ENCODE measurements at regions of chr19 and their contacts with region 1.

Region 1: DNA sequence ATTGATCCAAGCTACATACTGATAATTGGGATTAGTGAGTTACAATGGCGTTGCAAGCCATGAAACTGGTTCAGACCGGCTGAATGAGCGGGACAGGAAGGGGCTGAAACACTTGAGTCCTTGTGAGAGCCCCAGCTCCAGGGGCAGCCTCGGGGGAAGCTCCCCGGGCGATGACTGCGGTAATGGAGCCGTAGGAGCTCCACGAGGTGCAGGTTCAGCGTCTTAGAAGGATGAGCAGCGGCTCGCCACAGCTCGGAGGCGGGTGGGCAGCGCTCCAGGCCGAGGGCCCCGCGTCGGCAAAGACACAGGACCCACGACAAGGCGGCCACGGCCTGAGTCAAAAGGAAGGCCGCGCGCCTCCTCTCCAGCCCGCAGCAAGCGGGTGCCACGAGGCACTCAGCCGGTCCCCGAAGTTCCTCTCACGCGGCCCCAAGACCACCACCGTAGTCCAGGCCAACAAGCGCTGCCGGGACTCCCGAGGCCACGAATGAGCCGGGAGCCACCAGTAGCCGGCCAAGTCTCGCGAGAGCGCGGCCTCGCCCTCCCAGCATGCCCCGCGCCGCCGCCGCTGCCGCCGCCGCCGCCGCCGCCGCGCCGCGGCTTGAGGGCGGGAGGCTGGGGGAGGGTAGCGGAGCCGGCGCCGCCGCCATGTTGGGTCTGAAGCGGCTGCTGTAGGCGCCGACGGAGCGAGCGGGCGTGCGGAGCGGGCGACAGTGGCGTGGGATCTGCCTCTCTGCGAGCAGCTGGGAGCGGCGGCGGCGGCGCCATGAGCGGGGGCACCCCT is at the start of gene LSM14A:
- DNase-seq: peak; percentile 96
- ATAC-seq: peak; percentile 80 to 96 (median 85)
- H3K4me3 ChIP-seq: peak within 1 kb of the TSS; percentile 90
- H3K4me3 Mint-ChIP-seq: peak within 1 kb of the TSS; percentile 96
- H3K27ac ChIP-seq: peak within 1 kb of the TSS; percentile 98
- H3K27ac Mint-ChIP-seq: peak within 1 kb of the TSS; percentile 86 to 90
- H3K4me1 ChIP-seq: peaks cover 39% of the 10 kb centered on the region
- H3K4me1 Mint-ChIP-seq: peaks cover 29 to 48% of the 10 kb centered on the region in 2 donors
- H3K27me3 ChIP-seq: no peaks in the 10 kb centered on the region
- H3K27me3 Mint-ChIP-seq: peaks cover 4 to 8% of the 10 kb centered on the region in 2 donors
- CTCF ChIP-seq: no peak
- total RNA-seq, gene LSM14A: 201 to 246 (median 202) TPM

Region 2: GRCh38 chr19:34184880-34185491 is 12.9 kb after region 1 on chr19:
- intact Hi-C with region 1: loop called (anchors 1 kb)
- DNase-seq: peak; percentile 50 to 64
- ATAC-seq: peak; percentile 89 to 96 (median 91)
- H3K4me3 ChIP-seq: no peak overlapping the region
- H3K4me3 Mint-ChIP-seq: peak overlapping the region; percentile 70
- H3K27ac ChIP-seq: peak overlapping the region; percentile 87
- H3K27ac Mint-ChIP-seq: peak overlapping the region; percentile 89 to 98
- H3K4me1 ChIP-seq: peaks cover 34% of the 10 kb centered on the region
- H3K4me1 Mint-ChIP-seq: peaks cover 74 to 76% of the 10 kb centered on the region in 2 donors
- H3K27me3 ChIP-seq: no peaks in the 10 kb centered on the region
- H3K27me3 Mint-ChIP-seq: no peaks in the 10 kb centered on the region
- CTCF ChIP-seq: no peak

Region 3: GRCh38 chr19:34217952-34218817 is 46.1 kb after region 1 on chr19:
- intact Hi-C with region 1: loop called (anchors 2 kb)
- DNase-seq: peak; percentile 32 to 94
- ATAC-seq: peak; percentile 77 to 85 (median 83)
- H3K4me3 ChIP-seq: no peak overlapping the region
- H3K4me3 Mint-ChIP-seq: peak overlapping the region; percentile 14
- H3K27ac ChIP-seq: peak overlapping the region; percentile 52
- H3K27ac Mint-ChIP-seq: peak overlapping the region; percentile 57 to 68
- H3K4me1 ChIP-seq: peaks cover 10% of the 10 kb centered on the region
- H3K4me1 Mint-ChIP-seq: peaks cover 25 to 30% of the 10 kb centered on the region in 2 donors
- H3K27me3 ChIP-seq: no peaks in the 10 kb centered on the region
- H3K27me3 Mint-ChIP-seq: no peaks in the 10 kb centered on the region
- CTCF ChIP-seq: no peak

Region 4: DNA sequence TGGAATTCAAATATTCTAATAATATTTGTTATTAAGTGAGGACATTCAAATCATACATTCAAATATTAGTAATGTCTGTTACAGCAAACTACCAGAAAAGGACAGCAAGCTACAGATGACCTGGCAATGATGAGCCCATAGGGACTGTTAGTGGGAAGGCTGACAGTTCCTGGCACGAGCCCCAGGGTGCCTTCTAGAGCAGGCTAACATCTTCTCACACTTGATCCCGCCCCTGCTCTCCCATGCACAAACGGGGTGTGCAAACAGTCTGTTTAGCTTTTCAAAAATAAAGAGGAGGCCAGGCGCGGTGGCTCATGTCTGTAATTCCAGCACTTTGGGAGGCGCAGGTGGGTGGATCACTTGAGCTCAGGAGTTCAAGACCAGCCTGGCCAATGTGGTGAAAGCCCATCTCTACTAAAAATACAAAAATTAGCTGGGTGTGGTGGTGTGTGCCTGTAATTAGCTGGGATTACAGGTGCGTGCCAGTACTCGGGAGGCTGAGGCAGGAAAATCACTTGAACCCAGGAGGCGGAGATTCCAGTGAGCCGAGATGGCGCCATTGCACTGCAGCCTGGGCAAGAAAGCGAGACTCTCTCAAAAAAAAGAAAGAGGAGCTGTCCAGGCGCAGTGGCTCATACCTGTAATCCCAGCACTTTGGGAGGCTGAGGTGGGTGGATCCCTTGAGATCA is 72.7 kb after region 1 on chr19:
- intact Hi-C with region 1: no loop called
- DNase-seq: no peak
- ATAC-seq: no peak
- H3K4me3 ChIP-seq: no peak overlapping the region
- H3K4me3 Mint-ChIP-seq: no peak overlapping the region
- H3K27ac ChIP-seq: no peak overlapping the region
- H3K27ac Mint-ChIP-seq: no peak overlapping the region
- H3K4me1 ChIP-seq: no peaks in the 10 kb centered on the region
- H3K4me1 Mint-ChIP-seq: no peaks in the 10 kb centered on the region
- H3K27me3 ChIP-seq: no peaks in the 10 kb centered on the region
- H3K27me3 Mint-ChIP-seq: no peaks in the 10 kb centered on the region
- CTCF ChIP-seq: no peak

Region 5: GRCh38 chr19:34351382-34351826 is 179.3 kb after region 1 on chr19:
- intact Hi-C with region 1: loop called (anchors 5 kb)
- DNase-seq: peak in 1 of 2 donors; percentile 47
- ATAC-seq: no peak
- H3K4me3 ChIP-seq: no peak overlapping the region
- H3K4me3 Mint-ChIP-seq: peak overlapping the region; percentile 45
- H3K27ac ChIP-seq: peak overlapping the region; percentile 27
- H3K27ac Mint-ChIP-seq: peak overlapping the region; percentile 75 to 86
- H3K4me1 ChIP-seq: peaks cover 43% of the 10 kb centered on the region
- H3K4me1 Mint-ChIP-seq: peaks cover 19 to 23% of the 10 kb centered on the region in 2 donors
- H3K27me3 ChIP-seq: no peaks in the 10 kb centered on the region
- H3K27me3 Mint-ChIP-seq: no peaks in the 10 kb centered on the region
- CTCF ChIP-seq: no peak